Activated B cell treated with CpG ODN at 0.5 μM for 24 hours (primary cell): ENCODE measurements at regions of chr3 and their contacts with region 1.

Region 1: GRCh38 chr3:59857589-59858346 is 807.9 kb upstream of the CFAP20DC start:
- DNase-seq: peak; percentile 60
- ATAC-seq: peak; percentile 99
- H3K4me3 Mint-ChIP-seq: peak overlapping the region; percentile 48
- H3K27ac Mint-ChIP-seq: peak overlapping the region; percentile 39
- H3K4me1 Mint-ChIP-seq: peaks cover 5% of the 10 kb centered on the region
- H3K27me3 Mint-ChIP-seq: peaks cover 3% of the 10 kb centered on the region
- CTCF ChIP-seq: peak; percentile 60

Region 2: GRCh38 chr3:58994746-58995330 is 862.9 kb before region 1 on chr3:
- CTCF ChIA-PET with region 1: no interaction called
- POLR2A ChIA-PET with region 1: no interaction called
- intact Hi-C with region 1: loop called (anchors 1 kb)
- DNase-seq: no peak
- ATAC-seq: peak; percentile 54
- H3K4me3 Mint-ChIP-seq: peak overlapping the region; percentile 25
- H3K27ac Mint-ChIP-seq: no peak overlapping the region
- H3K4me1 Mint-ChIP-seq: peaks cover 4% of the 10 kb centered on the region
- H3K27me3 Mint-ChIP-seq: no peaks in the 10 kb centered on the region
- CTCF ChIP-seq: peak; percentile 42

Region 3: DNA sequence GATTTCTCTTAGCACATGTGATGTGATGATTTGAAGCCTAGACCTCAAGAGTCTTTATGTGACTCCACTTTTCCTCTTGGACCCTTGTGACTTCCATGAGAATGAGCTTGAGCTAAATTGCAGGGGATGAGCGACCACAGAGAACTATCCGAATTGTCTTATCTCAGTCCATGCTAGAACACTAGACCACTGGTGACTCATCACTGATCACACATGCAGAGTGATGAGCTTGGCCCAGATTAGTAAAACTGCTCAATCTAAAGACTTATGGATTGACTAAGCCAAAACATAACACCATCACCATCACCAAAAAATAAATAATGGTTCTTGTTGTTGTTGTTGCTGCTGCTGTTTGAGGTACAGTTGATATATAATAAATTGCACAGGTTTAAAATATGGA is 693.8 kb before region 1 on chr3:
- CTCF ChIA-PET with region 1: no interaction called
- POLR2A ChIA-PET with region 1: no interaction called
- intact Hi-C with region 1: no loop called
- DNase-seq: no peak
- ATAC-seq: no peak
- H3K4me3 Mint-ChIP-seq: no peak overlapping the region
- H3K27ac Mint-ChIP-seq: no peak overlapping the region
- H3K4me1 Mint-ChIP-seq: no peaks in the 10 kb centered on the region
- H3K27me3 Mint-ChIP-seq: no peaks in the 10 kb centered on the region
- CTCF ChIP-seq: no peak

Region 4: GRCh38 chr3:59212128-59212779 is 645.5 kb before region 1 on chr3:
- CTCF ChIA-PET with region 1: interaction called, 39 read pairs
- POLR2A ChIA-PET with region 1: no interaction called
- intact Hi-C with region 1: loop called (anchors 1 kb)
- DNase-seq: no peak
- ATAC-seq: peak; percentile 37
- H3K4me3 Mint-ChIP-seq: no peak overlapping the region
- H3K27ac Mint-ChIP-seq: no peak overlapping the region
- H3K4me1 Mint-ChIP-seq: no peaks in the 10 kb centered on the region
- H3K27me3 Mint-ChIP-seq: peaks cover 3% of the 10 kb centered on the region
- CTCF ChIP-seq: no peak

Region 5: GRCh38 chr3:59575113-59576001 is 282.4 kb before region 1 on chr3:
- CTCF ChIA-PET with region 1: interaction called, 104 read pairs
- POLR2A ChIA-PET with region 1: interaction called, 5 read pairs
- intact Hi-C with region 1: loop called (anchors 1 kb)
- DNase-seq: peak; percentile 76
- ATAC-seq: peak; percentile 61
- H3K4me3 Mint-ChIP-seq: no peak overlapping the region
- H3K27ac Mint-ChIP-seq: no peak overlapping the region
- H3K4me1 Mint-ChIP-seq: no peaks in the 10 kb centered on the region
- H3K27me3 Mint-ChIP-seq: no peaks in the 10 kb centered on the region
- CTCF ChIP-seq: peak; percentile 40

Region 6: GRCh38 chr3:59839810-59840515 is 17.8 kb before region 1 on chr3:
- CTCF ChIA-PET with region 1: interaction called, 9 read pairs
- POLR2A ChIA-PET with region 1: interaction called, 5 read pairs
- intact Hi-C with region 1: loop called (anchors 1 kb)
- DNase-seq: no peak
- ATAC-seq: peak; percentile 90
- H3K4me3 Mint-ChIP-seq: peak overlapping the region; percentile 76
- H3K27ac Mint-ChIP-seq: peak overlapping the region; percentile 95
- H3K4me1 Mint-ChIP-seq: peaks cover 48% of the 10 kb centered on the region
- H3K27me3 Mint-ChIP-seq: no peaks in the 10 kb centered on the region
- CTCF ChIP-seq: no peak

Region 7: DNA sequence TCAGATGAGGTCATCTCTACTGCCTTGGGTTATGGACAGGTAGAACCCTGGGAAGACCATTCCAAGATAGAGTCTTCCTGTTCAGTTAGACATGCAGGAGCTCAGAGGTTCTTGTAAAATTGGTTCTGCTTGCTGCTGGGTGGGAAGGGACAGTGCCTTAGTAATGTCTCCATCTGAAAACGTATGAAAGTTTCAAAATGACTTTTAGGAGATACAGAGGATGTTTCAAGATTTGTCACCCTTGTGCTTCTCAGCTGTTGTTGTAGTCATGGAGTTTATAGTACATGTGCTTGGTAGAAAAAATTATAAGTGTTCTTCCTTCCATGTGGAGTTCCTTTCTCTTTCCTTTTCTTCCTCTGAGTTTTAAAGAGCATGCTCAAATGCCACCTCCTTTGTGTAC is 77.3 kb after region 1 on chr3:
- CTCF ChIA-PET with region 1: no interaction called
- POLR2A ChIA-PET with region 1: no interaction called
- intact Hi-C with region 1: no loop called
- DNase-seq: no peak
- ATAC-seq: no peak
- H3K4me3 Mint-ChIP-seq: no peak overlapping the region
- H3K27ac Mint-ChIP-seq: no peak overlapping the region
- H3K4me1 Mint-ChIP-seq: peaks cover 3% of the 10 kb centered on the region
- H3K27me3 Mint-ChIP-seq: no peaks in the 10 kb centered on the region
- CTCF ChIP-seq: no peak

Region 8: DNA sequence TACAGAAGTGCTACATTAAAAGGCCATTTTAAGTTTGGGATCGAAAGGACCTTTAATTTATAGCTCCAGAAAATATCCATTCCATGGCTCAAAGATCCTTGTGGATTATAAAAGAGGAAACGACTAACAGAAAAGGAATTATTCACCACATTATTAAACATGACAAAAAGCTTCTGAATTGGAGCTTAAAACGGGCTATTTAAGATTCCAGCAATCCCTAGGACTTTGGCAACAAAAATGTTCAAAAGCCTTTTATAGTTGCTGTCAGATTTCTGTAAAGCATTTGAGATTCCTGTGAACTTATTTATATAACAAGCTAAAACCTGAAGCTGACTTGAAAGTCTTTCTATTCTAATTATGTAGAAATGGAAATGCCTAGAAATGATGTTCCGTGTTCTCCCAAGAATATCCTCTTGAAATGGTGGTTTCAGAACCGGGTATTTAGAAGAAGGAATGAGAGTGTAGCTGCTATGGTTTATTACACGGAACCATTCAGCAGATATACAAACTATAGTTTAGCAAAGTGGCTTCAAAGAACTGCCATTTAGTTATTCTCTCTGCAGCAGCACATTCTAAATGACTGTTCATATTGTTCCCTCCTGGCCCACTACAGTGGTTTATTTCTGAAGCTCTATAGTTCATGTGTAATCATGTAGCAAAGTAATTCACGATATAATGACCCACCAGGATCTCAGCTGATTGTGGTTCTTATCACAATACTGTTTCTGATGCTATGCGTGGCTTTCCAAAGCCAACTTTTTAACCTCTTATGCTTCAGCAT is 431.8 kb after region 1 on chr3:
- CTCF ChIA-PET with region 1: no interaction called
- POLR2A ChIA-PET with region 1: no interaction called
- intact Hi-C with region 1: no loop called
- DNase-seq: no peak
- ATAC-seq: no peak
- H3K4me3 Mint-ChIP-seq: no peak overlapping the region
- H3K27ac Mint-ChIP-seq: no peak overlapping the region
- H3K4me1 Mint-ChIP-seq: peaks cover 2% of the 10 kb centered on the region
- H3K27me3 Mint-ChIP-seq: no peaks in the 10 kb centered on the region
- CTCF ChIP-seq: no peak

Region 9: DNA sequence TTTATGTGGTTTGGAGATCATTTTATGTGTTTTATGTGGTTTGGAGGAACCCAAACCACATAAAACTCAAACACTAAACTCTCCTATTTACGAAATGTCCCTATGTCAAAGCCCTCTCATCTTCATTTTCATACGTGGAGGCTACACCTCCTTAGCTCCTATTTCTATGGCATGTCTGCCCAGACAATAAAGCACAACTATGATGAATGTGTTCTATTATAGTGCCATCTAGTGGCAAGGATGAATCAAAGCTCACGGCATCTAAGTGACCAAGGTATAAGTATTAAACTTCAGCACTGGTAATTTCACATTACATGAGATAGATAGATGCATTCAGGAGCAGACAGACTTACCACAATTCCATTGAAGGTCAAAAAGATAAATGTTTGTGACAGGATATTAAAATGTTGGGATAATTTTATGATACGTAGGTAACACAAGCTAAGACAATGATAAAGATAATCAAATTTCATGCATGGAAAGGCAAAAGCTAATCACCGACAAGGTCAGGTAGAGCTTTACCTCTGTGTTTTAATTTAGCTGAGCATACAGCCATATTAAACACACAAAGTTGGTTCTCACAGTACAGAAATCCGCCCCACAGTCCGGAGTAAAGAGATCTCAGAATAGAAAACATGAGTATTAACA is 1524.1 kb after region 1 on chr3:
- CTCF ChIA-PET with region 1: interaction called, 4 read pairs
- POLR2A ChIA-PET with region 1: no interaction called
- intact Hi-C with region 1: loop called (anchors 5 kb)
- DNase-seq: no peak
- ATAC-seq: peak; percentile 49
- H3K4me3 Mint-ChIP-seq: no peak overlapping the region
- H3K27ac Mint-ChIP-seq: no peak overlapping the region
- H3K4me1 Mint-ChIP-seq: no peaks in the 10 kb centered on the region
- H3K27me3 Mint-ChIP-seq: peaks cover 8% of the 10 kb centered on the region
- CTCF ChIP-seq: no peak